ENCODE measurements at regions of chr3 and their contacts with region 1.

Region 1: GRCh38 chr3:192566706-192567290 is 160.5 kb downstream of the FGF12 start:
- DNase-seq: peak; percentile 74
- ATAC-seq: peak; percentile 71

Region 2: DNA sequence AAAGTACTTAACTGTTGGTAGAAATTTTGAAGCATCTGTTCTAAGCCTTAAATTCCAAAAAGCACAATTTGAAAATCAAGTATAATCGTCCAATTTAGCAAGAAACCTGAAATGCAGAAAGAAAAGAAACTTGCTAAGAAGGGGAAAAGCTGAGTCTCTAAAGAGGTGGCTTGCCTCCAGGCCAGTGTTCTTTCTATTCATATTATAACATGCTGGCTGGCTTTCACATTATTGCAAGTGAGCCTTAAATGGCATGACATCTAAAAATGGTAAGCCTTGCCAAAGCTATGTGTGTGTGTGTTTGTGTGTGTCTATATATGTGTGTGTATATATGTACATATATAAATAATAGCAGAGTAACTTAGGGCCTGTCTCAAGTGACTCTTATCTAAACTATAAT is 71.0 kb after region 1 on chr3:
- intact Hi-C with region 1: loop called (anchors 5 kb)
- DNase-seq: no peak
- ATAC-seq: peak; percentile 57

Region 3: DNA sequence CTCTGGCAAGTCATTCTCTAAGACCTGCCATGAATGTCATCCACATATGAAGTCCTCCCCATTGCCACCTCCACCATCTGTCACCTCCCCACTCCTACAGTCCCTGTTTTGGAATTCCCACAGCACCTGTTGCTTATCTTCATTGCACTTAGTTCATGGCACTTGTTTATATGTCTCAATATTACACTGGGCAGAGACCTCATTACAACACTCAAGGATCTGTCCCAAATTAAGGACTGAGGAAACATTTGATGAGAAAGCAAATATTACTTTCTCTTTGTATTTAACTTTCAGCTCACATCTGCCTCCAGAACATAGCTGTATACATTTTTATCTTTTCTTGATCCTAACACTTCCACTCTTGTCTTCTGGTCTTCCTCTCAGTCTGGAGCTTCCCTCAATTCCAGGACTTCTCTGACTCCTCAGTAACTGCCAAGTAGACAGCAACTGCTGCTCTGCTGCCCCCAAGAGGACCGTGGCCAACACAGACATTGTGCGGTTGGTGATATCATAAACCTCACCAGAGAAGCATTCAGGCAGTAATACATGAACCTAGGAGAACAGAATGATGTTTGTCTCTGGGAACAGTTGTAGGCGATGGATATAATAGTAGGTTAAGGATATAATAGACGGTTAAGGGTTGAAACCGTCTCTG is 205.6 kb after region 1 on chr3:
- intact Hi-C with region 1: loop called (anchors 5 kb)
- DNase-seq: peak; percentile 61
- ATAC-seq: peak; percentile 96

Region 4: DNA sequence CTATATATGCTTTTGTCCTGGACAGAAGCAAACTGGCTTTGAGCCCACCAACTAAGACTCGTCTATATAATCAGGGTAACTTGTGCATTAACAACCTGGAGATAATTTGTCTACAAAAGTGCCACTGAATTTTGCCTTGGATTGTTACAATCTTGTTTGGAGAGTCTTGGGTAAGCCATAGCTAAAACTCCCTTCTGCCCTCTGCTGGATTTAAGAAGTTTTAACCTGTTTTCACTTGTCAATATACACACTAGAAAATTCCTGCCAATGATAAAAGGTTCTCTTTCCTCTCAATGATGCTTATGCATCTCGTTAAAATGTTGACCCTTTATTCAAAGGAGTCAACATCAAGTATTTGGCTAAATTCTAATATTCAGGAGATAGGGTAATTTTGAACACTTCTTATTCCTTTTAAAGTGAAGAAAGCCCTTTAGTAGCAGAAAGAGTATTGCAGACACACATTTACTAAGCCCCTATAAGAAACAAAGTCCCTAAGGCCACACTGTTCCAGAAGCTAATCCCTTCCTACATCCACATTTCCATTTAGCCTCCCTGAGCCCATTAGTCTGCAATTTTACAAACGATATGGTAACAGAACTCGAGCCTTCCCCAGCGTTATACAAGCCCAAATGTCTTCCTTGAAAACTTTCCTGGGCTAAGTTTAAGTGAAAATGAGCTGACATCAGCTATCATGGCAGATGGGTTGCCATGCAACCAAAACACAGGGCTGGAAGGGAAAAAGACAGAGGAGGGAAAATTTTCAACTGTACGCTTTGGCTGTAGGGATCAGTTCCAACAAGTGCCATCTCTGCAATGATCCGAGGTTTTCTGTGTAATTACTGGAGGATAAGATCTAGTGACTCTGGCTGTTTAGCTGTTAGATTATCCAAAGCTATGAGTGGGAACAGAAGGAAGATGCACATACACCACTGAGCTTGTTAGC is 236.4 kb after region 1 on chr3:
- intact Hi-C with region 1: loop called (anchors 2 kb)
- DNase-seq: no peak
- ATAC-seq: peak; percentile 78